ENCODE measurements at regions of chr1 and their contacts with region 1.

Region 1: DNA sequence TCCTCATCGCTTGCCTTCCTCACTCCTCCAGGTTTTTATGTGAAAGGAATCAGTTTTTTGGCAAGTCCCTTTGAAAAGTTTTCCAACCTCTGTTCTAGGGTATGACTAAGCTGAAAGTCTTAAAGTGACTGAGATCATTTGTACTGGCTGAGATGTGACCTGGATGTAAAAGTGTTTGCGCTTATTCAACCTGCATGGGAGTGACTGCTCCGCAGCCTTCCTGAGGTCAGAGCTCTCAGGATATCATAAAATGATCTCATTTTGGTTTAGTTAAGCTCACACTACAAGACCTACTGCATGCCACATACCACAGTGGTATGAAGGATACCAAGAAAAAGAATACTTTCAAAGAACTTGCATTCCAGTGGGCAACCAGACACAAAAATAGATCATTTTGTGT is 29.8 kb upstream of the TADA1 start:
- DNase-seq: no peak
- H3K4me3 ChIP-seq: no peak overlapping the region
- H3K27ac ChIP-seq: no peak overlapping the region
- H3K4me1 ChIP-seq: peaks cover 0 to 6% (median 2%) of the 10 kb centered on the region in 4 donors
- H3K27me3 ChIP-seq: no peaks in the 10 kb centered on the region
- CTCF ChIP-seq: no peak
- EP300 ChIP-seq: no peak
- POLR2A ChIP-seq: no peak

Region 2: DNA sequence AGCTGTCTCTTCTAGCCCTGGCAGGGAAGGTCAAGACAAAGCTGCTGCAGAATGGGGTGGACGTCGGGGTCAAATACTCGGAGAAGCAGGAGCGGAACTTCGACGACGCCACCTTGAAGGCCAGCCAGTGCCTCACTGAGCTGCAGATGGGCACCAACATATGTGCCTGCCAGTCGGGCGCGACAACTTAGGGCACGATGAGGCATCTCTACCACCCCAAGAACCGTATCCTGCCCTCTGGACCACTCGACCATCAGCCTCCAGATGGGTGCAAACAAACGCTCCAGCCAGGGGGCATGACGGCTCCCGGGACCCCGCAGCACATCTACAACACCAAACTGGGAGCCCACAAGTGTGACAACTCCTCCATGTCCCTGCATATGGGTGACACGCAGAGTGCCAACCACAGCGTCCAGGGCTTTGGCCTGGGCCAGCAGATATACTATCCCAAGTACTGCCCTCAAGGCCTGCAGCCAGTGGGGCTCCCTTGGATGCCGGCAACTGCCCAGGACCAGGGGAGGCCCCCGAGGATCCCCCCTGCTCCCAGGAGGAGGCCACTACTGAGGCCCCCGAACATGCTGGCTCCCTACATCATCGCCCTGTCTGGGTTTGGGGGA is 109.2 kb before region 1 on chr1:
- intact Hi-C with region 1: no loop called
- DNase-seq: no peak
- H3K4me3 ChIP-seq: no peak overlapping the region
- H3K27ac ChIP-seq: no peak overlapping the region
- H3K4me1 ChIP-seq: no peaks in the 10 kb centered on the region
- H3K27me3 ChIP-seq: peaks cover 0 to 9% (median 0%) of the 10 kb centered on the region in 3 donors
- CTCF ChIP-seq: no peak
- EP300 ChIP-seq: no peak
- POLR2A ChIP-seq: no peak

Region 3: GRCh38 chr1:167059045-167059808 is 153.3 kb after region 1 on chr1:
- intact Hi-C with region 1: loop called (anchors 5 kb)
- DNase-seq: peak; percentile 78 to 86
- H3K4me3 ChIP-seq: no peak overlapping the region
- H3K27ac ChIP-seq: no peak overlapping the region
- H3K4me1 ChIP-seq: peaks cover 0 to 8% (median 6%) of the 10 kb centered on the region in 4 donors
- H3K27me3 ChIP-seq: peaks cover 0 to 29% (median 3%) of the 10 kb centered on the region in 3 donors
- CTCF ChIP-seq: peak in 5 of 7 experiments; percentile 82 to 99 (median 94)
- EP300 ChIP-seq: no peak
- POLR2A ChIP-seq: no peak

Measured in stomach (tissue), 19 donors.